ENCODE measurements at regions of chr15 and their contacts with region 1.

Region 1: GRCh38 chr15:95626501-95627361 is 703.8 kb upstream of the NR2F2 start:
- DNase-seq: peak; percentile 13 to 52
- ATAC-seq: peak in 6 of 8 donors; percentile 13 to 81 (median 25)
- H3K4me3 ChIP-seq: no peak overlapping the region
- H3K27ac ChIP-seq: peak overlapping the region in 8 of 10 donors; percentile 7 to 62 (median 46)
- H3K4me1 ChIP-seq: peaks cover 0 to 4% (median 0%) of the 10 kb centered on the region in 9 donors
- H3K27me3 ChIP-seq: no peaks in the 10 kb centered on the region
- CTCF ChIP-seq: no peak

Region 2: GRCh38 chr15:95663146-95664100 is 36.7 kb after region 1 on chr15:
- intact Hi-C with region 1: loop called in 1 of 10 experiments (anchors 5 kb)
- DNase-seq: no peak
- ATAC-seq: no peak
- H3K4me3 ChIP-seq: no peak overlapping the region
- H3K27ac ChIP-seq: peak overlapping the region in 1 of 10 donors; percentile 25
- H3K4me1 ChIP-seq: peaks cover 0 to 10% (median 0%) of the 10 kb centered on the region in 9 donors
- H3K27me3 ChIP-seq: peaks cover 0 to 5% (median 0%) of the 10 kb centered on the region in 7 donors
- CTCF ChIP-seq: no peak

Region 3: GRCh38 chr15:95758851-95759250 is 132.1 kb after region 1 on chr15:
- intact Hi-C with region 1: no loop called
- DNase-seq: no peak
- ATAC-seq: no peak
- H3K4me3 ChIP-seq: no peak overlapping the region
- H3K27ac ChIP-seq: no peak overlapping the region
- H3K4me1 ChIP-seq: peaks cover 0 to 15% (median 6%) of the 10 kb centered on the region in 9 donors
- H3K27me3 ChIP-seq: no peaks in the 10 kb centered on the region
- CTCF ChIP-seq: no peak

Measured in heart right ventricle (tissue), 16 donors.